Psoas muscle (tissue), 8 donors: ENCODE measurements at regions of chr3 and their contacts with region 1.

Region 1: DNA sequence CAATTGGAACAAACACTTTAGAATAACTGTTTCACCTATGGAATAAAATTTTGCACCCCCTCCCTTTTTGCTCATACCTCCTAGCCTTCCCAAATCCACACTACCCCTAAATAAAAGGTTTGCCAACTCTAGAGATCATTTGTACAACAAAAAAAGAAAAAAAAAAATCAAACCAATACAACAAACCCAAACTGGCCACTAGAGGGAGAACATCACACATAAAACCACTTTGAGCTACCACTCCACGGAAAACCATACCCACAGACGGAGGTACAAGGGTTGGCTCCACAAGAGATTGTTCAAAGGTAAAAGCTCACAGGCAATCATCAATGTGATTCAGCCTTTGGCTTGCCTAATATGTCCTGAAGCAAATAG is 47.6 kb downstream of the SETMAR start:
- DNase-seq: no peak
- ATAC-seq: peak; percentile 72 to 93 (median 78)
- H3K4me3 ChIP-seq: peak overlapping the region; percentile 42
- H3K27ac ChIP-seq: no peak overlapping the region
- H3K4me1 ChIP-seq: no peaks in the 10 kb centered on the region
- H3K27me3 ChIP-seq: no peaks in the 10 kb centered on the region
- CTCF ChIP-seq: peak; percentile 83

Region 2: GRCh38 chr3:4466741-4467521 is 116.2 kb after region 1 on chr3 and contains the start of gene SUMF1:
- intact Hi-C with region 1: loop called in 1 of 2 experiments (anchors 10 kb)
- DNase-seq: peak; percentile 81 to 89
- ATAC-seq: peak; percentile 99 to 100 (median 100)
- H3K4me3 ChIP-seq: peak within 1 kb of the TSS; percentile 80
- H3K27ac ChIP-seq: peak within 1 kb of the TSS; percentile 85
- H3K4me1 ChIP-seq: peaks cover 8% of the 10 kb centered on the region
- H3K27me3 ChIP-seq: no peaks in the 10 kb centered on the region
- CTCF ChIP-seq: no peak
- total RNA-seq, gene SUMF1: 4.6 to 6.4 (median 5.1) TPM

Region 3: DNA sequence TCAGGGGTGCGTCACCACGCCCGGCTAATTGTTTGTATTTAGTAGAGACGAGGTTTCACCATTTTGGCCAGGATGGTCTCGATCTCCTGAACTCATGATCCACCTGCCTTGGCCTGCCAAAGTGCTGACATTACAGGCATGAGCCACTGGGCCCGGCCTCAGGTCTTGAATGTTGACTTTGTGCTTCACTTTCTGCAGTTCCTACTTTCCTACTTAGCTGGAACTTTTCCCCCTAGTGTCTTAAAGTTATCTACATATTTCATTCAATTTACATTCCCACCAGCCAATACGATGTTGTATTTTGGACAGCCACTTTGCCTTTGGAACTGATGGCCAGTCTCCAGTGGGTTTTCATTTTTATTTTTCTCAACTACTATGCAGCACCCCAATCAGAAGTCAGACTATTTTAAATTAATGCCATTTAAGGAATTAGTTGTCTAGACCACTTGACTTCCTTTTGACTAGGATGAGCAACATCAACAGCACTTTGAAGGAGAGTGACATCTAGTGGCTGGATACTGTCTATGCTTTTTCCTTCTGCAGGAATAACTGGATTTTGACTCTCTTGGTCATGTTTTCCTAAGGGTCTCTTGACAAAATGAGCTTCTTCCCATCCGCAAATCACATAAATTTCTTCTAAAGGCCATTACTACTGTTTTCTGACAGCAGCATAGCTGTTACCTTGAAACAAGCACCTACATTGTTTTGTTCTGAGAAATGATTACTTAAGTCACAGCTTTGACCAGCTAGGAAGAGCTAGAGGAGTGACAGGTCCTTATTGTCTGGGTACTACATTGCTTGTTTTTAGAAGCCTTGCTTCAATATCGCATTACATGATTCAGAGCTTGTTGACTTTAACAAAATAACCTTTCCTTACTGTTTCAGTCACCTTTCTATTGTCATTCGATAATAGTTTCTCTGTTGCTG is 282.6 kb after region 1 on chr3:
- intact Hi-C with region 1: loop called (anchors 1 to 2 kb)
- DNase-seq: no peak
- ATAC-seq: peak; percentile 59 to 82 (median 63)
- H3K4me3 ChIP-seq: no peak overlapping the region
- H3K27ac ChIP-seq: no peak overlapping the region
- H3K4me1 ChIP-seq: no peaks in the 10 kb centered on the region
- H3K27me3 ChIP-seq: no peaks in the 10 kb centered on the region
- CTCF ChIP-seq: peak; percentile 88